ENCODE measurements at regions of chr1 and their contacts with region 1.

Region 1: DNA sequence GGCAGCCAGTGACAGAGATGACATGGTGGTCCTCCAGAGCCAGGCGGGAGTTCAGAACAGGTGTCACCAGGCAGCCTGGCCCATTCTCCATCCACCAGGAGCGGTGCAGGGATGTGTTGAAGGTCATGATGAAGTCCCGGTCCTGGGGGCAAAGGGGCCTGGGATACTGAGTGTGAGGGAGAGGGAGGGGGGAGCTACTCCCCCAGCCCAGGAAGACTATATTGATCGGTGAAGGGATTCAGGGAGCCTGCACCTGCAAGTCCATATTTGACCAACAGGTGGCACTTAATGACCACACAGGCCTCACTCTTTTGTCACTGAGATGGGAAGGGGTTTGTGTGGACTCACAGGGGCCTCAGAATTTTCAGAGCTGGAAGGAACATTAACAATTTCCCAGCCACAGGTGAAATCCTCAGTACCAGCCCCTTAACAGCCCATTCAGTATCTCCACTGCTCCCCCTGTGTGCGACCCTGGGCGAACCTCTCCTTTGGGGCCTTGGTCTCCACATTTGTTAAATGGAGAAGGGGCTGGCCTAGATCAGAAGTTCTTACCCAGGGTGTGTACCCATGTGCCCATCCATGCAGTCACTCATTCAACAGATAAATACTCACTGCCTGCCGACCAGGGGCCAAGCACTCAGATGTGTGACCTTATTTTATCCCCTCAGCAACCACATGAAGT is 55.7 kb downstream of the NKAIN1 start:
- DNase-seq: no peak

Region 2: DNA sequence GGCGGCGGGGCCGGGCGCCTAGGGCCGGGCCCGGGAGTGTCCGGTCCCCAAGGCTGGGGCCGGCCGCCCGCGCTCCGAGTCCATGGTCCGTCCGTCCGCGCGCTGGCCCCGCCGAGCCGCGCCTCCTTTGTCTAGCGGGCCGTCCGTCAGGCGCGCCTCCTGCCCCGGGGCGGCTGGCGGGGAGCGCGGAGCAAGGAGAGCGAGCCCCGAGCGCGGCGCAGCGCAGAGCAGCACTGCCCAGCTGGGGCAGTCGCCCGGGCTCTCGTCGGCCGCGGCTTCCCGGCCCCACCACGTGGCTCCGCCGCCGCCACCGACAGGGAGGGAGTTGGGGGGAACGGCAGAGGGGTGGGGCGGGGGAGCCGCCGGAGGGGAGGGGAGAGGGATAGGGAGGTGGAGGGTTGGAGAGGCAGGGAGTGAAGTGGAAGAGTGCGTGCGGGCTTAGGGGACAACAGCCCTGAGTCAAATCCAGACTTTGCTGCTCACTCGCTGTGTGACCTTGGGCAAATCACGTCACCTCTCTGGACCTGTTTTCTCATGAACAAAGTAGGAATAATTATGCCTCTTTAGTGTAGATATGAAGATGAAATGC is 55.7 kb after region 1 on chr1 and contains the start of gene NKAIN1:
- intact Hi-C with region 1: no loop called
- DNase-seq: no peak
- total RNA-seq, gene NKAIN1: 0.11 TPM

Region 3: DNA sequence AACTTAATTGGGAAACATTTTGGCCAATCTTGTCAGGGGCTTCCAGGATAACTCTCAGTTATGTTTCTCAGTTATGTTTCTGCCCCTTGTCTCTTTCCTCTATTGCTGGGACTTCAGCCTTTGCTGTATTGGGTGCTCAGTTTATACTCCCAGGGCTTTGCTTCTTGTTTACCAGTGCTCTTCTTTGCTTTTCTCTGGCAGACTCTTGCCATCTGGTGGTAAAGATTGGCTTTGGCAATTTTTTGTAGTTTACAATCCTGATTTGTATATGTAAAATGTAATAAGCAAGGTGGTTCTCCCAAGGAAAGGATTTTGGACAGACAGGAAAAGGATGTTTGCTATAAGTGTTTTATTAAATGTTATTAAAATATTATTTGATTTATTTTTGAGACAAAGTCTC is 151.0 kb after region 1 on chr1:
- intact Hi-C with region 1: loop called (anchors 2 kb)
- DNase-seq: no peak

Region 4: DNA sequence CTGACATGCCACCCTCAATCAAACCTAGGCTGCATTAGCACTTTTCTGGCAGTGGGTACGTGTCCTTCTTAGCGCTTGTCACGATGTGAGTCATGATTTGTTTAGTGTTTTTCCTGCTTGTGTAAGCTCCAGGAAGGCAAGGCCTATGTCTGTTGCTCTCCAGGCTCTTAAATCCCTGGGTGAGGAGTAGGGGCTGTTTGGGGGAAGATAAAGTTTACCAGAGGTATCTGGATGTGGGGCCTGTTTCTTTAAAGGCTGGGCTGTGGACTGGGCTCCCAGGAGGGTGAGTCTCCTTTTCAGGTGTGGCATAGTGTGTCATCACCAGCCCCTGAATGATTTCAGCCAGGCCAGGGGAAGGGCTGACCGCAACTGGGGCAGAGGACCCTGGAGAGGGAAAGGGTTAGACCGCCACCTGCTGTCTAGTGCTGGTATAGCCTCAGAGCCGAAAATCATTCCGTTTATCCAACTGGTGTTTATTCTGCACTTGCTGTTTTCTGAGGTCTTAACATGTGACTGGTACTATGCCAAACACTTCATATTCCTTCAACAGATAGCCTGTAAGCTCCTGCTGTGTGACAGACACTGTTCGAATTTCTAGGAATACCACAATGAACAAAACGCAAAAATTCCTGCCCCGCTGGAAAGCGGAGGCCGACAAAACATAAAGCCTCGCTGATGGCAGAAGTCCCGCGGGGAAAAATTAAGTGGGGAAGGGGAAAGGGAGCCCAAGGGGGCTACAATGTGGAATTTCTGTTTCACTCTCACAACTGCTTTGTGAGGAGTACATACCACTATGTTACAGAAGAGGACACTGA is 238.7 kb after region 1 on chr1:
- intact Hi-C with region 1: loop called (anchors 1 kb)
- DNase-seq: no peak

Region 5: DNA sequence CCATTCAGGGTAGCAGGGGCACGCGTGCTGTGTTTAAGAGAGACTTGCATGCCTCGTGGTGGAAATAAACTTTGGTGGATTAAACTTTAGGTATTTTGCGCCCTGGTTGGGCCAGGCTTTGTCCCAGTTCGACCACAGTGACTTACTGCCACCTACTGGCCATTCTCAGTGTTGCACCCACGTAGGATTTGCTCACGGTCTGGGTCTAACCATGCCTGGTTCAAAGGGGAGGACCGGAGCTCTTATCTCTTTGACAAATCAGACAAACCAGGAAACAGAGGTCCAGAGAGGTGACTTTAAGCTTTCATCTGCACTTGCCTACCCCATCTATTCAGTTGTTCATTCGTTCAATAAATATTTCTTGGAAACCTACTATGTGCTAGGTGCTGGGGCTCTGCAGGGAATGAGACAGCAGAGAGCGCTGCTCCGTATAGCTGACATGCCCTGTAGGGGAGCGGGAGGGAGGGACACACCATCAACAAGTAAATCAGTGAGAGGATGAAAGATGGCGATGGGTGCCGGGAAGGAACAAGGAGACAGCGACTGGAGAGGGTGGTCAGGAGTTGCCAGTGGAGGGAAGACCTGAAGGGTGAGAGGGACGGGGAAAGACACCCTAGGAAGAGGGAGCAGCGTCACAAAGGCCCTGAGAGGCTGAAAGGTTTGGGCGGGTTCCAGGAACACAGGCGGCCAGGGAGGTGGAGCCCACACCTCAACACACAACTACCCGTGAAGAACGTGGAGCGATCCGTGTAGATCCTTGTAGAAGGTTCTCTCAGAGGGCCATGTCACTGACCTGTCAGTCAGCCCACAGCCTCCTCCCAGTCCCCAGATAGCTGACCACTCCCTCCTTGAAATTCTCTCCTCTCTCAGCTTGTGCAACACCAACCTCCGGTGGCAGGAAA is 365.1 kb after region 1 on chr1:
- intact Hi-C with region 1: loop called (anchors 2 kb)
- DNase-seq: peak; percentile 92

Measured in cardiac septum (tissue), 1 donor.